Colonic mucosa (tissue), 4 donors: ENCODE measurements at regions of chr6 and their contacts with region 1.

Region 1: GRCh38 chr6:167925026-167925425 is 72.4 kb upstream of the KIF25 start:
- DNase-seq: no peak
- H3K4me3 ChIP-seq: no peak overlapping the region
- H3K27ac ChIP-seq: no peak overlapping the region
- H3K4me1 ChIP-seq: no peaks in the 10 kb centered on the region
- H3K27me3 ChIP-seq: no peaks in the 10 kb centered on the region
- CTCF ChIP-seq: no peak

Region 2: GRCh38 chr6:167668019-167668753 is 256.8 kb before region 1 on chr6:
- intact Hi-C with region 1: no loop called
- DNase-seq: peak; percentile 48
- H3K4me3 ChIP-seq: no peak overlapping the region
- H3K27ac ChIP-seq: no peak overlapping the region
- H3K4me1 ChIP-seq: no peaks in the 10 kb centered on the region
- H3K27me3 ChIP-seq: no peaks in the 10 kb centered on the region
- CTCF ChIP-seq: no peak

Region 3: GRCh38 chr6:168117942-168118341 is 192.9 kb after region 1 on chr6:
- intact Hi-C with region 1: loop called (anchors 10 kb)
- DNase-seq: no peak
- H3K4me3 ChIP-seq: no peak overlapping the region
- H3K27ac ChIP-seq: no peak overlapping the region
- H3K4me1 ChIP-seq: no peaks in the 10 kb centered on the region
- H3K27me3 ChIP-seq: no peaks in the 10 kb centered on the region
- CTCF ChIP-seq: no peak